Ascending aorta (tissue), 2 donors: ENCODE measurements at regions of chr10 and their contacts with region 1.

Region 1: DNA sequence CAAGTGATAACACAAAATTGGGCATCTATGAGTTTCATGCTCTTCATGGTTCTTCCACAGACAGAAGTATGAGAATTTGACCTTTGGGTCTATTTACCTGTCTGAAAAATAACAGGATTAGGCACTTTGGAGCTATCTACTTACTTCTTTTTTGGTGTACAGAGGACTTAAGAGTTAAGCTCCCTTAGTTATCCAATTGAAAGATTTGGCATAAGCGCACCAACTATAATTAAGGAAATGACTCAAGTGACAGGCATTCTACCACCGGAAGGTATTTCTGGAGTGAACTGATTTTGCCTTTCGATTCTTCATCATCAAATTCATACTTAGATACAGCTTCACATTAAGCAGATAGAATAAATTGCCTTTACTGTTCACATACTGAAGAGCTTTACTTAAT is 43.9 kb downstream of the IFIT5 start:
- DNase-seq: no peak
- H3K4me3 ChIP-seq: no peak overlapping the region
- H3K27ac ChIP-seq: peak overlapping the region in 1 of 2 donors; percentile 5
- H3K4me1 ChIP-seq: peaks cover 0 to 3% of the 10 kb centered on the region in 2 donors
- H3K27me3 ChIP-seq: no peaks in the 10 kb centered on the region
- CTCF ChIP-seq: no peak

Region 2: DNA sequence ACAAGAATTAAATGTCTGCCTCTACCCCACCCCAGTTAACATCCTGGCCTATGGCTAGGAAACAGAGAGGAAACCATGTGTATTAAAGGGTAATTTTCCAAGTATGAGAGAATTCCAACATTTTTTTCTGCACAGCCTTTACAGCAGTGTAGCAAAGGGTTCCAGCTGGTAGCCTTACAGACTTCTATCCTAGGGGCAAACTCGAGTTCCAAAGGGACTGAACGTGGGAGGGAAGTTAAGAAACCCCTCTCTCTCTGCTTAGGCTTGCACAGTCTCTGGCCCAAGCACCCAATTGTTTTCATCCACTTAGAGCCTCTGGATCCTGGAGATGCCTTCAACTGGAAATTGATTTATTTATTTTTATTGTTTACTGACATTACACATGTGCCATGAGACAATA is 16.8 kb after region 1 on chr10:
- intact Hi-C with region 1: loop called (anchors 2 kb)
- DNase-seq: no peak
- H3K4me3 ChIP-seq: no peak overlapping the region
- H3K27ac ChIP-seq: peak overlapping the region; percentile 35 to 57
- H3K4me1 ChIP-seq: peaks cover 7 to 38% of the 10 kb centered on the region in 2 donors
- H3K27me3 ChIP-seq: no peaks in the 10 kb centered on the region
- CTCF ChIP-seq: no peak